Mammary epithelial cell (primary cell): ENCODE measurements at regions of chr3 and their contacts with region 1.

Region 1: GRCh38 chr3:111967651-111968274 is 11.1 kb upstream of the ABHD10 start:
- DNase-seq: peak; percentile 58
- H3K4me3 ChIP-seq: no peak overlapping the region
- H3K27ac ChIP-seq: no peak overlapping the region
- H3K4me1 ChIP-seq: peaks cover 16% of the 10 kb centered on the region
- H3K27me3 ChIP-seq: no peaks in the 10 kb centered on the region
- CTCF ChIP-seq: peak; percentile 85 to 86

Region 2: DNA sequence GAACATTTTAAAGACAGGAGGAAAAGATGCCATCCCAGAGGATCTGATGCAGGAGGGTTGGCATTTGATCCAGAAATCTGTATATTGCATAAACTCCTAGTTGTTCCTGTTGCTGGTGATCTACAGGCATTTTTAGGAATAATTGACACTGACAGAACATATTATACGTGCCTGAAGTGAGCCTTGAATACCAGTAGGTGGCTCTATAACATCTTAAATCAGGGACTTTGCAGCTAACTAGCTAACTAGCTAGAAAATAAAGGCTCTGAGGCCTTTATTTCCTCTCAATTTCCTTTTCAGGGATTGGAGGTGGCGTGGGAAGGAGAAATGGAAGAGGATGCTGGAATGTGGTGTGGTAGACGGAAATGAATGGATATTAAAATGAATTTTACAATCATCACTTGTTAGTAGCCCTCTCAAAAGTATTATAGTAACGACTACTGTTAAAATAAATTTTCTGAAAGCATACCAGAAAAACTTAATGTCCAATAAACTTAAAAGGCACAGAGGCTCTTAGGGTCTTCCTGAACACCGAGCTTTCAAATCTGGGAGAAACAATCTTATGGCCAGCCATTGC is 298.8 kb before region 1 on chr3:
- CTCF ChIA-PET with region 1: interaction called, 5 read pairs
- dilution Hi-C with region 1: no loop called
- in situ Hi-C with region 1: no loop called
- intact Hi-C with region 1: loop called (anchors 1 kb)
- DNase-seq: peak; percentile 48
- H3K4me3 ChIP-seq: no peak overlapping the region
- H3K27ac ChIP-seq: no peak overlapping the region
- H3K4me1 ChIP-seq: peaks cover 49% of the 10 kb centered on the region
- H3K27me3 ChIP-seq: no peaks in the 10 kb centered on the region
- CTCF ChIP-seq: peak; percentile 76 to 85

Region 3: DNA sequence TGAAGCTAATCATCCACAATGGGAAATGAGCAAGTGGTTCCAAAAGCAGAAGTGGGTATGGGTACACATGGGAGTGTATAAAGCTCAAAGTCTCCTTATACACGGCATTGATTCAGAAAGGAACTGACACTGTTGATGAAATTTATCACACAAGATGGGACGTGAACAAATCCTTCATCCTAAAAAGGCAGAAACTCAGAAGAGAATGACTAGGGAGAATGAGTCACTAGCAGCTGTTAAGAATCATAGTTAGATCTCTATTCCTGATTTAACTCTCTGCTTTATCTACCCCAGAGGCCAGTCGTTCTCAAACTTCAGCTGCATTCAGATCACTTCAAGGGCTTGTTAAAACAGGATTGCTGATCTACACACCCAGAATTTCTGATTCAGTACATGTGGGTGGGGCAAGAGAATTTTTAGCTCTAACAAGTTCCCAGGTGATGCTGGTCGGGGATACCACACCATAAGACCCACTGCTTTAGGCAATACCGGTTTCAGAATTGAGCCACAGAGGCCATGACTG is 206.4 kb before region 1 on chr3:
- CTCF ChIA-PET with region 1: no interaction called
- dilution Hi-C with region 1: no loop called
- in situ Hi-C with region 1: no loop called
- intact Hi-C with region 1: loop called (anchors 1 kb)
- DNase-seq: peak; percentile 100
- H3K4me3 ChIP-seq: no peak overlapping the region
- H3K27ac ChIP-seq: peak overlapping the region; percentile 100
- H3K4me1 ChIP-seq: peaks cover 60% of the 10 kb centered on the region
- H3K27me3 ChIP-seq: no peaks in the 10 kb centered on the region
- CTCF ChIP-seq: no peak

Region 4: GRCh38 chr3:111895079-111895478 is 72.7 kb before region 1 on chr3:
- CTCF ChIA-PET with region 1: no interaction called
- dilution Hi-C with region 1: no loop called
- in situ Hi-C with region 1: no loop called
- intact Hi-C with region 1: loop called (anchors 1 kb)
- DNase-seq: no peak
- H3K4me3 ChIP-seq: no peak overlapping the region
- H3K27ac ChIP-seq: no peak overlapping the region
- H3K4me1 ChIP-seq: no peaks in the 10 kb centered on the region
- H3K27me3 ChIP-seq: no peaks in the 10 kb centered on the region
- CTCF ChIP-seq: peak; percentile 28 to 48

Region 5: GRCh38 chr3:112338021-112338726 is 370.4 kb after region 1 on chr3:
- CTCF ChIA-PET with region 1: no interaction called
- dilution Hi-C with region 1: no loop called
- in situ Hi-C with region 1: no loop called
- intact Hi-C with region 1: no loop called
- DNase-seq: peak; percentile 30
- H3K4me3 ChIP-seq: no peak overlapping the region
- H3K27ac ChIP-seq: no peak overlapping the region
- H3K4me1 ChIP-seq: peaks cover 6% of the 10 kb centered on the region
- H3K27me3 ChIP-seq: no peaks in the 10 kb centered on the region
- CTCF ChIP-seq: no peak